Activated naive CD4-positive, alpha-beta T cell treated with anti-CD3 and anti-CD28 coated beads, Interleukin-2, amount 10 ng/mL, durations not matched to agents 7 days and 5 days (primary cell): ENCODE measurements at regions of chr7 and their contacts with region 1.

Region 1: GRCh38 chr7:3092468-3092867 is 48.8 kb upstream of the CARD11 start:
- DNase-seq: peak; percentile 86
- H3K4me3 Mint-ChIP-seq: peak overlapping the region; percentile 58
- H3K27ac Mint-ChIP-seq: peak overlapping the region; percentile 97
- H3K4me1 Mint-ChIP-seq: peaks cover 73% of the 10 kb centered on the region
- H3K27me3 Mint-ChIP-seq: peaks cover 3% of the 10 kb centered on the region

Region 2: DNA sequence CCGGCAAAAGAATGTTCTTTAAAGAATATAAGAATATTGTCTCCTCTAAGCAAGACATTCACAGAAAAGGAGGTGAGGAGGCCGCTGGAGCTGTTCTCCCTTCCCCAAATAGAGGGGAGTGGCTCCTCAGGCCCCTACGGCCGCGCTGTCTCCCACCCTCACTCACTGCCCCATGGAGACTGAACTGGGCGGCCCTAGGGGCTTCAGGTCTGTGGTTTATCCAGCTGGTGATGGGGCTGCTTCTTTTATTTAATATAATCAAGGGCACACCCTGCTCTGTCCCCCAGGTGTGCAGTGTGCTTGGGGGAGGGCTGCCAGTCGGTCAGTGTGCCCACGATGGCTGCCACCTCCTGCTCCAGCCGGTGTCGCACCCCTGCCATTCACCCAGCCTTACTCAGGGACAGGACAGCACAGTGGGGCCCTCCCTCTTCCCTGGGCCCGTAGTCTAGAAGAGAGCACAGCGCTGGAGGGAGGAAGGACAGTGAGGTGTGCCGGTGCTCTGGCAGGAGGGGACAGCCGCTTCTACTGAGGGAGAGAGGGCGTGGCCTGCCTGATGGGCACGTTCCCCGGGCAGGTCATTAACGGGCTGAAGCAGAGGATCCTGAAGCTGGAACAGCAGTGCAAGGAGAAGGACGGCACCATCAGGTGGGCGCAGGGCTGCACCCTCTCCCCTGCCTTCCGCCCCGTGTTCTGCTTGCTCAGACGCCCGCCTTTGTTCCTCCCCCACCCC is 510.3 kb before region 1 on chr7:
- CTCF ChIA-PET with region 1: no interaction called
- DNase-seq: no peak
- H3K4me3 Mint-ChIP-seq: no peak overlapping the region
- H3K27ac Mint-ChIP-seq: no peak overlapping the region
- H3K4me1 Mint-ChIP-seq: no peaks in the 10 kb centered on the region
- H3K27me3 Mint-ChIP-seq: no peaks in the 10 kb centered on the region

Region 3: GRCh38 chr7:3055626-3056025 is 36.8 kb before region 1 on chr7:
- CTCF ChIA-PET with region 1: no interaction called
- DNase-seq: no peak
- H3K4me3 Mint-ChIP-seq: no peak overlapping the region
- H3K27ac Mint-ChIP-seq: no peak overlapping the region
- H3K4me1 Mint-ChIP-seq: no peaks in the 10 kb centered on the region
- H3K27me3 Mint-ChIP-seq: peaks cover 43% of the 10 kb centered on the region

Region 4: GRCh38 chr7:3117488-3118231 is 25.2 kb after region 1 on chr7:
- CTCF ChIA-PET with region 1: interaction called, 16 read pairs
- DNase-seq: peak; percentile 57
- H3K4me3 Mint-ChIP-seq: peak overlapping the region; percentile 70
- H3K27ac Mint-ChIP-seq: peak overlapping the region; percentile 89
- H3K4me1 Mint-ChIP-seq: peaks cover 86% of the 10 kb centered on the region
- H3K27me3 Mint-ChIP-seq: peaks cover 13% of the 10 kb centered on the region

Region 5: GRCh38 chr7:3154912-3155494 is 62.5 kb after region 1 on chr7:
- CTCF ChIA-PET with region 1: interaction called, 12 read pairs
- DNase-seq: peak; percentile 71
- H3K4me3 Mint-ChIP-seq: no peak overlapping the region
- H3K27ac Mint-ChIP-seq: no peak overlapping the region
- H3K4me1 Mint-ChIP-seq: peaks cover 19% of the 10 kb centered on the region
- H3K27me3 Mint-ChIP-seq: peaks cover 29% of the 10 kb centered on the region

Region 6: DNA sequence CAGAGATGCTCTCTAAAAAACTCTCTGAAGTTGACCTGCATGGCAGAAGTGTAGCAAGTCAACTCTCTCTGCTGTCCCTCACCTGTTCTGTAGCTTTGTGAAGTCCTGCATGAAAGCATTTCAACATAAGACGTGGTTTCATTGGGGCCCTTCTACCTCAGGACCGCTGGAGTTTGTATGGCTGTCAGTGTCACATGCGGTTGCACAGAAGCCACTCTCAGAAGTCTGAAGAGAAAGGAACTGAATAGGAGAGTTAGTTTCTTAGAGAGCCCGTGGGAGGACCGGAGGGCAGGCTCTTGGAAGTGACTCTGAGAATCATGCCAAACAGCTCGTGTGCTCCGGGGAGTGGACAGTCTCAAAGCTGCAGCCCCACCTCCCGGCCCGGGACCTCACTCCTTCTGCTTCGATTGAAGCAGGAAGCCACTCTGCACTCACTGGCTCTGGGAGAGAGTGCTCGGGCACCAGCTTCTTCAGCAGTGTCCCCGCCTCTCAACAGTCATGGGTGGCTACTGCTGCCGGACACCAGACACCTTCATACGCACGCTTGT is 695.3 kb after region 1 on chr7:
- CTCF ChIA-PET with region 1: no interaction called
- DNase-seq: no peak
- H3K4me3 Mint-ChIP-seq: no peak overlapping the region
- H3K27ac Mint-ChIP-seq: no peak overlapping the region
- H3K4me1 Mint-ChIP-seq: no peaks in the 10 kb centered on the region
- H3K27me3 Mint-ChIP-seq: peaks cover 7% of the 10 kb centered on the region